Prostate gland (tissue), 2 donors: ENCODE measurements at regions of chr3 and their contacts with region 1.

Region 1: DNA sequence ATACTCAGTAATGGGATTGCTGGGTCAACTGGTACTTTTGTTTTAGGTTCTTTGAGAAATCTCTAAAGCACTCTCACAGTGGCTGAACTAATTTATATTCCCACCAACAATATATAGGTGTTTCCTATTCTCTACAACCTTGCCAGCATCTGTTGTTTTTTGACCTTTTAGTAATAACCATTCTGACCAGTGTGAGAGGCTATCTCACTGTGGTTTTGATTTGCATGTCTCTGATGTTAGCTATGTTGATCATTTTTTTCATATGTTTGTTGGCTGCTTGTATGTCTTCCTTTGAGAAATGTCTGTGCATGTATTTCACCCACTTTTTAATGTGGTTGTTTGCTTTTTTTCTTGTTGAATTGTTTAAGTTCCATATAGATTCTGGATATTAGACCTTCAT is 98.2 kb upstream of the DCBLD2 start:
- DNase-seq: no peak
- H3K4me3 ChIP-seq: no peak overlapping the region
- H3K27ac ChIP-seq: no peak overlapping the region
- H3K4me1 ChIP-seq: no peaks in the 10 kb centered on the region
- H3K27me3 ChIP-seq: no peaks in the 10 kb centered on the region
- CTCF ChIP-seq: no peak
- POLR2A ChIP-seq: no peak

Region 2: DNA sequence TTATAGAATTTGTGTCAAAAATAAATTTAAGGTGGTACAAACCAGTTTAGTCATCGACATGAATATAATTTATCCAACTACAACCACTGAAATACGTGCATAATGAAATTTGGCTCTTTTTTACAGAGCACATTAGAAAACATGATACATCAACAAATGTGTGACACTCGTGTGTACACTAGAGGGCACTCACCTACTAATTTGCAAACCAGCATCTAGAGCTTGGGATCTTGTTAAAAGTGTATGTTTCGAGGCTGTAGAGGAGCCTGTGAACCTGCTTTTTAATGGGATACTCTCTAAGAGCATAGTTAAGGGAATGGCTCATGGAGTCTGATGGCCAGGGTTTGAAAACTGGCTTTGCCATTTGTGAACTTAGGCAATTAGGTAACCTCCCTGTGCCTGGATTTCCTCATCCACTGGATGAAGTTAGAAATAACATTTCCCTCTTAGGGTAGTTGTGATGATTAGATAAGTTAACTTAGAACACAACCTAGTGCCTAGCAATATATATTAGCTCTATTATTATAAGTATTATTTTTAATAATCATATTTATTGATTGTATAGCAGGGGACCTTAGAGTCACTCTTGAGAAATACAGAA is 397.5 kb before region 1 on chr3:
- intact Hi-C with region 1: loop called (anchors 5 kb)
- DNase-seq: peak; percentile 35
- H3K4me3 ChIP-seq: no peak overlapping the region
- H3K27ac ChIP-seq: no peak overlapping the region
- H3K4me1 ChIP-seq: no peaks in the 10 kb centered on the region
- H3K27me3 ChIP-seq: no peaks in the 10 kb centered on the region
- CTCF ChIP-seq: peak; percentile 51 to 73 (median 68)
- POLR2A ChIP-seq: no peak